Activated naive CD4-positive, alpha-beta T cell treated with anti-CD3 and anti-CD28 coated beads for 36 hours (primary cell): ENCODE measurements at regions of chr2 and their contacts with region 1.

Region 1: GRCh38 chr2:215454519-215455246 is 18.8 kb upstream of the FN1 start:
- DNase-seq: no peak
- H3K4me3 Mint-ChIP-seq: no peak overlapping the region
- H3K27ac Mint-ChIP-seq: no peak overlapping the region
- H3K4me1 Mint-ChIP-seq: no peaks in the 10 kb centered on the region
- H3K27me3 Mint-ChIP-seq: peaks cover 8% of the 10 kb centered on the region

Region 2: GRCh38 chr2:215425021-215425782 is 29.5 kb before region 1 on chr2:
- CTCF ChIA-PET with region 1: no interaction called
- intact Hi-C with region 1: no loop called
- DNase-seq: no peak
- H3K4me3 Mint-ChIP-seq: no peak overlapping the region
- H3K27ac Mint-ChIP-seq: no peak overlapping the region
- H3K4me1 Mint-ChIP-seq: no peaks in the 10 kb centered on the region
- H3K27me3 Mint-ChIP-seq: peaks cover 40% of the 10 kb centered on the region

Region 3: GRCh38 chr2:215920244-215921100 is 465.8 kb after region 1 on chr2:
- CTCF ChIA-PET with region 1: interaction called, 6 read pairs
- intact Hi-C with region 1: loop called (anchors 1 kb)
- DNase-seq: peak; percentile 80
- H3K4me3 Mint-ChIP-seq: no peak overlapping the region
- H3K27ac Mint-ChIP-seq: no peak overlapping the region
- H3K4me1 Mint-ChIP-seq: no peaks in the 10 kb centered on the region
- H3K27me3 Mint-ChIP-seq: no peaks in the 10 kb centered on the region